ENCODE measurements at regions of chr13 and their contacts with region 1.

Region 1: GRCh38 chr13:95970878-95971277 is 82.3 kb downstream of the UGGT2 start:
- DNase-seq: no peak
- ATAC-seq: no peak

Region 2: GRCh38 chr13:95880331-95880730 is 90.5 kb before region 1 on chr13:
- intact Hi-C with region 1: loop called in 1 of 2 experiments (anchors 10 kb)
- DNase-seq: no peak
- ATAC-seq: no peak

Region 3: GRCh38 chr13:96540671-96541070 is 569.8 kb after region 1 on chr13:
- intact Hi-C with region 1: no loop called
- DNase-seq: no peak
- ATAC-seq: no peak